Activated CD4-positive, alpha-beta memory T cell treated with anti-CD3 and anti-CD28 coated beads, Interleukin-2, amount 10 ng/mL, durations not matched to agents 7 days and 5 days (primary cell): ENCODE measurements at regions of chr10 and their contacts with region 1.

Region 1: DNA sequence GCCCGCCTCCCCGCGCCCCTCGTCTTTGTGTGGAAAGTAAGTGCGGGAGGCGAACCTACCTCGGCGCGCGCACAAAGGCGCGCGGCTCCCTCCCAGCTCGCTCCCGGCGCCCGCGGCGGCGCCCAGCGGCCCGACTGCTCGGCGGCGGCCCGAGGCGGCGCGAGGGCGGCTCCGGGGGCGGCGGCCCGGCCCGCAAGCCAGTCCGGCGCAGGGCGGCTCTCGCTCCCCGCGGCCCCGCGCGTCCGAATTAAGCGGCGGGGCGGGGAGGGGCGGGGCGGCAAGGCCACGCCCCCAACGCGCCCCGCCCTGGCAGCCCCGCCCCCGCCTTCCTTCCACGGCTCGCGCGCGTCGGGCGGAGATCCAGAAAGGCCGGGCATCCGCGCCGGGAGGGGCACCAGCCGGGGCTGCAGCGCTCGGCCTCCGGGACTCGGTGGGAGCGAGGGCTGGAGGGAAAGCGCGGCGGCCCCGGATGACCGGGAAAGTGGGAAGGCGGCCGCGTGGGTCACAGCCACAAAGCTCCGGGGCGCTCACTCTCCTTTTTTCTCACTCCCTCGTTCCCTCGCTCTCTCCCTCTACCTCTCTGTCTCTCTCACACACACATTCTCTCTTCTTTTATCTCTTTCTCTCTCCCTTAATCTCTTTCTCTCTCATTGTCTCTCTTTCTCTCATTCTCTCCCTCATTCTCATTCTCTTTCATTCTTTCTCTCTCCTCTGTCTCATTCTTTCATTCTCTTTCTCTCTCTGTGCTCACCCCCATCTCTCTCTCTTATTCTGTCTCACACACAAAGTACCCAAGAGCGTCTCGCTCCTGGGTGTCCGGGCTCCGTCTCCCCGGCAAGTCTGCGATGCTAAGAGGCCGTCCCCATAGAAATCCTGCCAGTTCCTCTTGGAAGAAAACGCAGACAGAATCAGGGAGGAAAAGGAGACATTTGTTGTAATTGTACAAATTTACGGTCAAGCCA is 170.2 kb downstream of the FAM107B start:
- DNase-seq: peak; percentile 77
- H3K4me3 Mint-ChIP-seq: peak overlapping the region; percentile 94
- H3K27ac Mint-ChIP-seq: peak overlapping the region; percentile 89
- H3K4me1 Mint-ChIP-seq: peaks cover 58% of the 10 kb centered on the region
- H3K27me3 Mint-ChIP-seq: no peaks in the 10 kb centered on the region

Region 2: GRCh38 chr10:14578060-14578952 is 26.2 kb before region 1 on chr10:
- CTCF ChIA-PET with region 1: no interaction called
- POLR2A ChIA-PET with region 1: interaction called, 19 read pairs
- DNase-seq: no peak
- H3K4me3 Mint-ChIP-seq: no peak overlapping the region
- H3K27ac Mint-ChIP-seq: no peak overlapping the region
- H3K4me1 Mint-ChIP-seq: peaks cover 81% of the 10 kb centered on the region
- H3K27me3 Mint-ChIP-seq: no peaks in the 10 kb centered on the region

Region 3: GRCh38 chr10:14648005-14648765 is 43.7 kb after region 1 on chr10:
- CTCF ChIA-PET with region 1: no interaction called
- POLR2A ChIA-PET with region 1: interaction called, 20 read pairs
- DNase-seq: peak; percentile 79
- H3K4me3 Mint-ChIP-seq: peak overlapping the region; percentile 75
- H3K27ac Mint-ChIP-seq: peak overlapping the region; percentile 96
- H3K4me1 Mint-ChIP-seq: peaks cover 72% of the 10 kb centered on the region
- H3K27me3 Mint-ChIP-seq: no peaks in the 10 kb centered on the region